ENCODE measurements at regions of chr6 and their contacts with region 1.

Region 1: DNA sequence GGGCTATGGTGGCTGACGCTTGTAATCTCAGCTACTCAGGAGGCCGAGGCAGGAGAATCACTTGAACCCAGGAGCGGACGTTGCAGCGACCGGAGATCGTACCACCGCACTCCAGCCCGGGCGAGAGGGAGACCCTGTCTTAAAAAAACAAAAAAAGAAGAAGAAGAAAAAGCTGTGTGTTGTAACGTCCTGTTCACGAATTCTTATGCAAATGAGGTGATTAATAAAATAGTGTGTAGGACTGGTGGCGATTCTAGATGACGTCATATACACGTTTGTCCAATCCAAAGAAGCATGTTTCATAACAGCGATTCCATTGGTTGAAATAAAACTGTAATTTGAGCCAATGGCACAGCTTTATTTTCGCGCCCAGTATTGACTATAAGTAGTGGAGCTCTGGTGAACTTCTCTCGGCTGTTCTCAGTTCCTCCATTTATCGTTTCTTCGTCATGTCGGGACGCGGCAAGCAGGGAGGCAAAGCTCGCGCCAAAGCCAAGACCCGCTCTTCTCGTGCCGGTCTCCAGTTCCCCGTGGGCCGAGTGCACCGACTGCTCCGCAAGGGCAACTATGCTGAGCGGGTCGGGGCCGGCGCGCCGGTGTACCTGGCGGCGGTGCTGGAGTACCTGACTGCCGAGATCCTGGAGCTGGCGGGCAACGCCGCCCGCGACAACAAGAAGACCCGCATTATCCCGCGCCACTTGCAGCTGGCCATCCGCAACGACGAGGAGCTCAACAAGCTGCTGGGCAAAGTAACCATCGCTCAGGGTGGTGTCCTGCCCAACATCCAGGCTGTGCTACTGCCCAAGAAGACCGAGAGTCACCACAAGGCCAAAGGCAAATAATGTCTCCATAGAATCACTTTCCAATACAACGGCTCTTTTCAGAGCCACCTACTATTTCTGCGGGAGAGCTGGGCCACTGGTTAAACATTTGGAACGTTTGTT is 47.0 kb downstream of the OR2B2 start:
- DNase-seq: peak; percentile 96
- H3K4me3 Mint-ChIP-seq: peak overlapping the region; percentile 91
- H3K27ac Mint-ChIP-seq: peak overlapping the region; percentile 97
- H3K4me1 Mint-ChIP-seq: no peaks in the 10 kb centered on the region
- H3K27me3 Mint-ChIP-seq: no peaks in the 10 kb centered on the region
- CTCF ChIP-seq: no peak

Region 2: DNA sequence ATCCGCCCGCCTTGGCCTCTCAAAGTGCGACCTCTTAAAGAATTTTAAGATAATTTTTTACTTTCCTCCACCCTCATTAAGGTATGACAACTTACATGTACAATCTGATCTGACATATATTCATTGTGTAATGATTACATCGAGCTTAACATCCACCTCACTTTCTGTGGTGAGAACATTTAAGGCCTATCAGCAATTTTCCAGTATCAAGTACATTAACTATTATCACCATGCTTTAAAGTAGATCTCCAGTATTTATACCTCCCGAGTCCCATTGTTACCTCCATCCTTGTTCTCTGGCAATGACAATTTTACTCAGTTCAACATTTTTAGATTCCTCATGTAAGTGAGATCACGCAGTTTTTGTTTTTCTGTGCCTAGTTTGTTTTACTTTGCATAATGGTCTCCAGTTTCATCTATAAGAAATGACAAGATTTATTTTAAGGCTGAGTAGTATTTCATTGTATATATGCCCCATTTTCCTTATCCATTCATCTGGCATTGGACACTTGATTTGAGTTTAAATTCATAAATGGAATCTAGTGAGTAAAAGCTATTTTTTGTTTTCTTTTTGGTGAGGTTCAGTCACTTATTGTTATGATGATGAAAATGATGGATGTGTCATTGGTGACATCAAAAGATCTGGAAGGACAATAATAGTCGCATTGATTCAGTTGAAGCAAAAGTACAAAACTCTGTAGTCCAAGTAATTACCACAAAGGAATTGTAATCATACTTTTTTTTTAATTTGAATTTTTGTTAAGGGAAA is 40.0 kb before region 1 on chr6:
- CTCF ChIA-PET with region 1: no interaction called
- POLR2A ChIA-PET with region 1: interaction called, 826 read pairs
- intact Hi-C with region 1: no loop called
- DNase-seq: no peak
- H3K4me3 Mint-ChIP-seq: peak overlapping the region; percentile 94
- H3K27ac Mint-ChIP-seq: peak overlapping the region; percentile 95
- H3K4me1 Mint-ChIP-seq: peaks cover 10% of the 10 kb centered on the region
- H3K27me3 Mint-ChIP-seq: no peaks in the 10 kb centered on the region
- CTCF ChIP-seq: no peak

Region 3: DNA sequence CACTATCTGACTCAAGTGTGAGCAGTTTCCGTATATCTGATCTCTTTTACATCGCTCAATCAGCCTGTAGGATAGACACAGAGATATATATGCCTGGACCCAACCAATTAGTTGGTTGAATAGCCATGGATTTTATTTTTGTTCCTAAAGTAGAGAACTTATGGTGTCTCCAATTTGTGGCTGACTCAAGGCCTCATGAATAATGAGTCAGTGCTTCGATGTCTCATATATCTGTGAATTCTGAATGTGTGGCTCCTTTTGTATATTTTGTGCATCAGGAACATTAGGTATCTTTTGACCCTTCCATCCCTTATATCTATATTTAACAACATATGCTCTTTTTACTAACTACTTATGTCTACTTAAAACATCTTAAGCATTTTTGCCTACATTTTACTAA is 17.5 kb before region 1 on chr6:
- CTCF ChIA-PET with region 1: interaction called, 4 read pairs
- POLR2A ChIA-PET with region 1: interaction called, 42 read pairs
- intact Hi-C with region 1: no loop called
- DNase-seq: no peak
- H3K4me3 Mint-ChIP-seq: no peak overlapping the region
- H3K27ac Mint-ChIP-seq: no peak overlapping the region
- H3K4me1 Mint-ChIP-seq: no peaks in the 10 kb centered on the region
- H3K27me3 Mint-ChIP-seq: no peaks in the 10 kb centered on the region
- CTCF ChIP-seq: no peak

Region 4: GRCh38 chr6:27882624-27883023 is 17.4 kb after region 1 on chr6:
- CTCF ChIA-PET with region 1: no interaction called
- POLR2A ChIA-PET with region 1: interaction called, 644 read pairs
- intact Hi-C with region 1: no loop called
- DNase-seq: no peak
- H3K4me3 Mint-ChIP-seq: no peak overlapping the region
- H3K27ac Mint-ChIP-seq: no peak overlapping the region
- H3K4me1 Mint-ChIP-seq: no peaks in the 10 kb centered on the region
- H3K27me3 Mint-ChIP-seq: no peaks in the 10 kb centered on the region
- CTCF ChIP-seq: no peak

Region 5: DNA sequence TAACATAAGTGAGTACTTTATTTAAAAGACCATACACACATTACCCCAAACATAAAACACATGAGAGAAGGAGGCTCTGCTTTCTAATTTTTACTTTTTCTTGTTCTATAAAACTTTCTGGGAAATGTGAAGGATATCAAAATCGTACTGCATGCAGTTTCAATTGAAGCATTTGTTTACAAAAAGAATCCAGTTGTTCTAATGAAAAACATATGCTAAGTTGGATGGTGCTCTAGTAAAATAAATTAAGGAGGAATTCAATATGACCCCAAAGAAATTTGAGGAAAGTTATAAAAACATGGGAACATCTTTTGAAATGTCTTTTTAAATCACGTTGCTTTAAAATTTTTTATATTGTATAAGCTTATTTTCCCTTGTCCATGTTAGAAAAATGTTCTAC is 129.4 kb after region 1 on chr6:
- CTCF ChIA-PET with region 1: no interaction called
- POLR2A ChIA-PET with region 1: no interaction called
- intact Hi-C with region 1: no loop called
- DNase-seq: no peak
- H3K4me3 Mint-ChIP-seq: no peak overlapping the region
- H3K27ac Mint-ChIP-seq: no peak overlapping the region
- H3K4me1 Mint-ChIP-seq: no peaks in the 10 kb centered on the region
- H3K27me3 Mint-ChIP-seq: peaks cover 64% of the 10 kb centered on the region
- CTCF ChIP-seq: no peak